ENCODE measurements at regions of chr15 and their contacts with region 1.

Region 1: GRCh38 chr15:48861813-48862431 is 16.0 kb upstream of the EID1 start:
- DNase-seq: peak; percentile 20
- H3K4me3 Mint-ChIP-seq: no peak overlapping the region
- H3K27ac Mint-ChIP-seq: peak overlapping the region; percentile 28
- H3K4me1 Mint-ChIP-seq: peaks cover 19% of the 10 kb centered on the region
- H3K27me3 Mint-ChIP-seq: peaks cover 2% of the 10 kb centered on the region

Region 2: GRCh38 chr15:48833506-48834231 is 28.3 kb before region 1 on chr15:
- intact Hi-C with region 1: no loop called
- DNase-seq: no peak
- H3K4me3 Mint-ChIP-seq: no peak overlapping the region
- H3K27ac Mint-ChIP-seq: no peak overlapping the region
- H3K4me1 Mint-ChIP-seq: no peaks in the 10 kb centered on the region
- H3K27me3 Mint-ChIP-seq: peaks cover 5% of the 10 kb centered on the region

Region 3: GRCh38 chr15:48896869-48897814 is 35.2 kb after region 1 on chr15:
- intact Hi-C with region 1: loop called (anchors 5 kb)
- DNase-seq: no peak
- H3K4me3 Mint-ChIP-seq: no peak overlapping the region
- H3K27ac Mint-ChIP-seq: peak overlapping the region; percentile 73
- H3K4me1 Mint-ChIP-seq: peaks cover 24% of the 10 kb centered on the region
- H3K27me3 Mint-ChIP-seq: no peaks in the 10 kb centered on the region

Region 4: GRCh38 chr15:48975472-48976419 is 113.8 kb after region 1 on chr15:
- intact Hi-C with region 1: loop called (anchors 2 kb)
- DNase-seq: peak; percentile 76
- H3K4me3 Mint-ChIP-seq: peak overlapping the region; percentile 58
- H3K27ac Mint-ChIP-seq: no peak overlapping the region
- H3K4me1 Mint-ChIP-seq: peaks cover 10% of the 10 kb centered on the region
- H3K27me3 Mint-ChIP-seq: no peaks in the 10 kb centered on the region

Region 5: GRCh38 chr15:49060710-49061505 is 199.0 kb after region 1 on chr15:
- intact Hi-C with region 1: no loop called
- DNase-seq: no peak
- H3K4me3 Mint-ChIP-seq: no peak overlapping the region
- H3K27ac Mint-ChIP-seq: no peak overlapping the region
- H3K4me1 Mint-ChIP-seq: peaks cover 9% of the 10 kb centered on the region
- H3K27me3 Mint-ChIP-seq: no peaks in the 10 kb centered on the region

Region 6: DNA sequence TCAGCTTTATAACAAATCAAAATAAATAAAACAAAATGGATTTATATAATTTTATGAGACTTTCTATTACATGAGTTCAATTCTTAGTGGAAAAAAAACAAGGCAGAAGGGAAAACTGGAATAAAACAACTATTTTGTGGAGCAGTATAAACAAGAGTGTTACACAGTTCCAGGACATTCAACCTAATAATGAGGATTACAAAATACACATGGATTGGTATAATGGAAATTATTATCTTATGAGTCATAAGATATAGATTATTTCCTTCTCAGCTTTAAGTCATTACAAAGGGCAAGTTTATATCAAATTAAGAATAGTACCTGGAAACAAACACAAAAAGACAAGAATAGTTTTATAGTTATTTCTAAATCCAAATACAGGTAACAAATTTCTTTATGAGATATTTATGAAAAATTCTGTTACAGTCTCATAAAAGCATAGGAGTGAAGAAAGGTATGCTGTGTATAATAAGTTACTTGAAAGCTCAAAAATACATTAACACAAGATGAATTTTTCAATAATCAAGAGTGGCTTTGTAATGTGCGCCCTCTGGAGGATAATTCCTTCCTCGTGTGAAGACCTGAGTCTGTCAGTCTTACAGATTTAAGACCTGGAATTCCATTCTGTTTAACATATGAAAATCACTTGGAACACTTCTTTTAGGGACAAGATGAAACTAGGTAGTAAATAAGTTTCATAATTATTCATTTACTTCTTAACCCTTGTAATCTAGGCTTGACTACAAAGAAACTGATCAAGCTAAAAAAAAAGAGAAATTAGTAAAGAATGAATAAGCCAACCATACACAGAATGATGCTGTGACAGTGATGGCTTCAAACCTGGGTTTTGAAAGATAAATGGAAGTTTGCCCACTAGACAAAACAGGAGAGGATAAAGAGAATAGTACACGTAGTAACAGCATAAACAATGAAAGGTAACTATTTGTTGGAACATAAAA is 284.0 kb after region 1 on chr15:
- intact Hi-C with region 1: loop called (anchors 1 kb)
- DNase-seq: no peak
- H3K4me3 Mint-ChIP-seq: no peak overlapping the region
- H3K27ac Mint-ChIP-seq: no peak overlapping the region
- H3K4me1 Mint-ChIP-seq: peaks cover 25% of the 10 kb centered on the region
- H3K27me3 Mint-ChIP-seq: no peaks in the 10 kb centered on the region

Region 7: DNA sequence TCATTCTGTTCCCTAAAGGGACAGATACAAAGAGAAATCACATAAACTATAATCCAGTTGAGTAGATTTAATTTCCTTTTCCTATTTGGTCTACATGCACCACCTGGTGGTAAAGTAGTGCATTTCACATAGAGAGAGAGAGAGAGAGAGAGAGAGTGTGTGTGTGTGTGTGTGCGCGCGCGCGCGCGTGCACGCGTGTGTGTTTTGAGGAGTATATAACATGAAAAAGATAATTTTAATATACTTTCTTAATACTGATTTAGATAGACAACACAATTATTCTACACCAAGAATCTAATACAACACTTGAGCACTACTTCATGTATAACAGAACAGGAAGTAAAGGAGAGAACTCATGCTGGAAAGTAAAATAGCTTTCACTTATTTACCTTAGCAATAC is 560.1 kb after region 1 on chr15:
- intact Hi-C with region 1: loop called (anchors 5 kb)
- DNase-seq: no peak
- H3K4me3 Mint-ChIP-seq: no peak overlapping the region
- H3K27ac Mint-ChIP-seq: peak overlapping the region; percentile 0
- H3K4me1 Mint-ChIP-seq: peaks cover 4% of the 10 kb centered on the region
- H3K27me3 Mint-ChIP-seq: peaks cover 17% of the 10 kb centered on the region

Measured in activated T-helper 2 cell treated with anti-CD3 and anti-CD28 coated beads, Interferon-gamma antibody, Interleukin-2, Interleukin-4, amounts not matched to agents 10 μg/mL and 5 μg/mL and 100 μg/mL, durations not matched to agents 14 hours and 24 hours and 36 hours (primary cell).